ENCODE measurements at regions of chr6 and their contacts with region 1.

Region 1: GRCh38 chr6:168979254-168979653 is 274.4 kb downstream of the THBS2 start:
- DNase-seq: no peak
- ATAC-seq: no peak
- H3K4me3 ChIP-seq: no peak overlapping the region
- H3K4me3 Mint-ChIP-seq: no peak overlapping the region
- H3K27ac ChIP-seq: no peak overlapping the region
- H3K27ac Mint-ChIP-seq: no peak overlapping the region
- H3K4me1 ChIP-seq: no peaks in the 10 kb centered on the region
- H3K4me1 Mint-ChIP-seq: no peaks in the 10 kb centered on the region
- H3K27me3 ChIP-seq: no peaks in the 10 kb centered on the region
- H3K27me3 Mint-ChIP-seq: no peaks in the 10 kb centered on the region
- CTCF ChIP-seq: no peak

Region 2: GRCh38 chr6:169529931-169530751 is 550.9 kb after region 1 on chr6:
- CTCF ChIA-PET with region 1: no interaction called
- POLR2A ChIA-PET with region 1: no interaction called
- intact Hi-C with region 1: loop called in 1 of 2 experiments (anchors 10 kb)
- DNase-seq: peak in 3 of 9 experiments; percentile 5 to 29 (median 24)
- ATAC-seq: peak; percentile 65
- H3K4me3 ChIP-seq: no peak overlapping the region
- H3K4me3 Mint-ChIP-seq: no peak overlapping the region
- H3K27ac ChIP-seq: no peak overlapping the region
- H3K27ac Mint-ChIP-seq: peak overlapping the region; percentile 76
- H3K4me1 ChIP-seq: peaks cover 12% of the 10 kb centered on the region
- H3K4me1 Mint-ChIP-seq: peaks cover 16% of the 10 kb centered on the region
- H3K27me3 ChIP-seq: no peaks in the 10 kb centered on the region
- H3K27me3 Mint-ChIP-seq: no peaks in the 10 kb centered on the region
- CTCF ChIP-seq: no peak

Measured in CD8-positive, alpha-beta T cell (primary cell).